Endothelial cell of umbilical vein (primary cell): ENCODE measurements at regions of chr9 and their contacts with region 1.

Region 1: DNA sequence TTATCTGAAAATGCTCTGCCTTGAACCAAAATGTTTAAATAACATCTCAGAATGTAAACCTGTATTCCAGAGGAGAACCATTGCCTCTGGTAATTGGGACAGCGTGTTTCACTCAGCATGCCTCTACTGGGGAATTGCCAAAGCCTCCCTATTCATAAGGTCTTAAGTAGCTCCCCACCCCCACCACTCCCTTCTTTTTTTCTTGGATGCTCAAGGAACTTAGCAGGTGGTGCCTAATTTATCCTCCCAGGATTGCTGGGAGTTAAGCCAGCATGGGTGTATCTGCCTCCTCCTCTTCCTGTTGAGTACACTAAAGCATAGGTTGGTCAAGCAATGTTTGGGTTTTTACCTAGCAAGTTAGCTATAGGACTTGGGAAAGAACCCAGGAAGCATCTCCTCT is 220.2 kb downstream of the DMAC1 start:
- DNase-seq: no peak
- H3K4me3 ChIP-seq: no peak overlapping the region
- H3K27ac ChIP-seq: no peak overlapping the region
- H3K4me1 ChIP-seq: no peaks in the 10 kb centered on the region
- H3K27me3 ChIP-seq: no peaks in the 10 kb centered on the region
- CTCF ChIP-seq: no peak
- POLR2A ChIP-seq: no peak

Region 2: DNA sequence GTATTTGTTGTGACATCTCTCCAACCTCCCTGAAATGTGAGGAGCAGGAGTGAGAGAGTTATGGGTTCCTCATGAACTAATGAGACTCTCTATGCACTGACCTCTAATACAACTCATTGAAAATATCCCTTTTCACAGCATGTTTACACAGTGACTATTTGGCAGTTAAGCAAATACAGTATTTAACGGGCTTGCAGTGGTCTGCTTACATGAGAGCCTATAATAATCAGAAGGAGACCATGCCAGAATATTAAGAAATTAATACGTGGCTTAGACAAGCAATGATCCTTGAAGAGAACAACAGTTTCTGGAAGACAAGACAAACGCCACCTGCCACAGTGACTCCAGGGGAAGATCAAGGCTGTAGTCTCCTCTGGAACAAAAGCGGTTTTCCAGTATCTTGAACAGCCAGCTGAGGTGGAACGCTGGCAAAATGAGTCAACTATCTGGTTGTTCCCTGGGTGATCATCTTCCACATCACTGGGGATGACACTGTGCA is 204.3 kb before region 1 on chr9:
- CTCF ChIA-PET with region 1: no interaction called
- POLR2A ChIA-PET with region 1: no interaction called
- dilution Hi-C with region 1: no loop called
- intact Hi-C with region 1: no loop called
- DNase-seq: no peak
- H3K4me3 ChIP-seq: no peak overlapping the region
- H3K27ac ChIP-seq: no peak overlapping the region
- H3K4me1 ChIP-seq: no peaks in the 10 kb centered on the region
- H3K27me3 ChIP-seq: no peaks in the 10 kb centered on the region
- CTCF ChIP-seq: no peak
- POLR2A ChIP-seq: no peak

Region 3: DNA sequence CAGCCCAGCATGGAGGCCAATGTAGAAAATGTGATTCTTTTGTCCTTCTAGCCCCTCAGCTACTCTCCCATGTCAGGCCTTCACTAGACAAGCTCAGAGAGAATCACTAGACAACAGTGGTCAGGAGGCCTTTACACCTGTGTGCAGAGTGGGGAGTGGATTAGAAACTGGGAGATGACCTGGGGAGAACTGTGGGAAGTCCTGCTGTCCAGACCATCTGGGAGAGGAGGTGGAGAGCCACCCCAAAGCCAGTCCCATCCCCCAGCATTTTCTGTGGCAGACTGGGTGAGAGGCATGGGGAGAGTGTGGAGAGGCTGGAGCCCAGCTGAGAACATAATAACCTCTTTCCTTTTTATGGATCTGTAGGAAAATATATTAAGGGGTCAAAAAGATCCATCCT is 672.2 kb after region 1 on chr9:
- CTCF ChIA-PET with region 1: no interaction called
- POLR2A ChIA-PET with region 1: interaction called, 10 read pairs
- dilution Hi-C with region 1: no loop called
- intact Hi-C with region 1: no loop called
- DNase-seq: no peak
- H3K4me3 ChIP-seq: no peak overlapping the region
- H3K27ac ChIP-seq: no peak overlapping the region
- H3K4me1 ChIP-seq: no peaks in the 10 kb centered on the region
- H3K27me3 ChIP-seq: no peaks in the 10 kb centered on the region
- CTCF ChIP-seq: no peak
- POLR2A ChIP-seq: no peak

Region 4: DNA sequence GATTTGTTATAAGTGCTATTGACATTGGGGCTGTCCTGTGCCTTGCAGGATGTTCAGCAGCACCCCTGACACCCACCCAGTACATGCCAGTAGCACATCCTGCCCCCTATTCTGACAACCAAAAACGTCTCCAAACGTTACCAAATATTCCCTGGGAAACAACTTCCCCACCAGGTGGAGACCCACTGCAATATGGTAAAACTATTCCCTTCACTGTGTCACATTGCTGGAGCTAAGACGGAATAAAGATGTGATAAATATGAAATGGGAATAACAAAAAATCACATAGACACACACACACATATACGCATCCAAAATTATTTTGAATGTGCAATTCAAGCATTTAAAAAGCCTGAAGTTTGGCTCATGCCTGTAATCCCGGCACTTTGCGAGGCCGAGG is 1094.5 kb after region 1 on chr9:
- CTCF ChIA-PET with region 1: no interaction called
- POLR2A ChIA-PET with region 1: no interaction called
- dilution Hi-C with region 1: no loop called
- intact Hi-C with region 1: loop called (anchors 5 kb)
- DNase-seq: no peak
- H3K4me3 ChIP-seq: no peak overlapping the region
- H3K27ac ChIP-seq: no peak overlapping the region
- H3K4me1 ChIP-seq: no peaks in the 10 kb centered on the region
- H3K27me3 ChIP-seq: no peaks in the 10 kb centered on the region
- CTCF ChIP-seq: no peak
- POLR2A ChIP-seq: no peak